Left cardiac atrium (tissue), 4 donors: ENCODE measurements at regions of chr15 and their contacts with region 1.

Region 1: DNA sequence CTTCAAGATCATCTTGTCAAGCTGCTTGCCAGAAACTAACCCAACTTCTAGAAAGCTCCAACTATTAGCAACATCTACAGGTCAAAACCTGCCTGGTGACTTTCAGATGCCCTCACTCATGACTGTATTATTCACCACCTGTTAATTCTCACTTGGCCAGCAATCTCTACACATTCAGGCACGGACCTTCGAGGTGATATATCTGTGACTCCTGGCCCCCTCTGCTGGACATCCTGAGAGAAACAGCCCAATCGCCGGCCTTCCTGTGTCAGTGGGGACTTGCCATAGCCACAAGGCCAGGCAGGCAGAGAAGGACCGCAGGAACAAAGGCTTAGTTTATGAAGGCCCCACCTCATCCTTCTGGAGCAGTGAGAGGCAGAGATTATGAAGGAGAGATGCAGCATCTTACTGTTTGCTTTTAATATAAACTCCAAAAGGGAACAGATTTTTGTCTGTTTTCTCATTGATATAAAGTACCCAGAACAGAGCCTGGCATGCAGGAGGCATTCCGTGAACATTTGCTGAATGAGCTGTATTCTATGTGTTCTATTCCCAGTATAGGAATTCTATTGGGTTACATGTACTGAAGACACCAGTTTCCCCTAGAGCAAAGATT is 24.4 kb upstream of the OCA2 start:
- DNase-seq: peak; percentile 74
- ATAC-seq: peak; percentile 46 to 63

Region 2: DNA sequence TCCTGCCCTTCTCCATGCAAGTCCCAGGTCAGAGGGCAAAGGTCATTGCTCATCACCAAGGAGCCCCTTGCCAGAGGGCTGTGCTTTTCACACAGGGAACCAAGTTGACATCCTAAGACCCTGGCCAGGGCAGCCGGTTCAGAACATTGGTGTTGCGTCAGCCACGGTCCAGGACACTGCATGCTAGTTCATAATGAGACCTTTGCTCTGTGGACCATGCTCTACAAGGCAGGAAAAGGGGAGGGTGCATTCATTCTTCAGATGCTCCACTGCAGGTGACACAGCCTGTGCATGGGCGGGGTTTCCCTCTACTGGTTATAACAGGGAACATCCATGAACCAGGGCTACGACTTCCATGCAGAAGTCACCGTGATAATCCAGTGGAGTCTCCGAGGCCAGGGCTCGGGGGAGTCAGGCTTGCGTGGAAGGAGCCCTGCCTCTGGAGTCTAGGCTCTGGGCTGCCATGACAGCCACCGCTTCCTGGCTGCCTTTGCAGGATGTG is 106.0 kb before region 1 on chr15:
- intact Hi-C with region 1: loop called in 1 of 2 experiments (anchors 5 kb)
- DNase-seq: no peak
- ATAC-seq: no peak

Region 3: DNA sequence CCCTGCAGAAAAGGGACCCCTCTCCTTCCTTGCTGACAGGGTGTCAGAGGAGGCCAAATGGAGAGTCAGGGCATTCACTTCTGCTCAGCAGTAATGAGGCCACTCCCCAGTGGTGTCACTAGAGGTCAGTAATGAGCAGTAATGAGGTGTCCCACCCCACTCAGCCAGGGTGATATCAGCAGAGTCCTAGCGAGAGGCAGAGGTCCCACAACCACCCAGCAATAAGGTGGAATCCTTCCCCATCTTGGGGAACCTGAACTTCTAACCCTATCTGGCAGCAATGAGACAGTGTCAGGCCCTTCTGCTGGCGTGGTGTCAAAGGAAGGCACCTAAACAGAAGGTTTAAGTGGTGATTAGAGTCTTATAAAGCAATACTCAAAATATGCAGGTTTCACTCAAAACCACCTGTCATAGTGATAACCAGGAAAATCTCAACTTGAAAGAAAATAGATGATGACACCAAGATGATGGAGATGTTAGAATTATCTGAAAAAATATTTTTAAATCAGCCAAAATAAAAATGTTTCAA is 37.3 kb before region 1 on chr15:
- intact Hi-C with region 1: loop called in 1 of 2 experiments (anchors 5 kb)
- DNase-seq: peak; percentile 55
- ATAC-seq: peak; percentile 96 to 98

Region 4: GRCh38 chr15:28184166-28184565 is 60.6 kb after region 1 on chr15:
- intact Hi-C with region 1: loop called in 1 of 2 experiments (anchors 10 kb)
- DNase-seq: no peak
- ATAC-seq: no peak

Region 5: DNA sequence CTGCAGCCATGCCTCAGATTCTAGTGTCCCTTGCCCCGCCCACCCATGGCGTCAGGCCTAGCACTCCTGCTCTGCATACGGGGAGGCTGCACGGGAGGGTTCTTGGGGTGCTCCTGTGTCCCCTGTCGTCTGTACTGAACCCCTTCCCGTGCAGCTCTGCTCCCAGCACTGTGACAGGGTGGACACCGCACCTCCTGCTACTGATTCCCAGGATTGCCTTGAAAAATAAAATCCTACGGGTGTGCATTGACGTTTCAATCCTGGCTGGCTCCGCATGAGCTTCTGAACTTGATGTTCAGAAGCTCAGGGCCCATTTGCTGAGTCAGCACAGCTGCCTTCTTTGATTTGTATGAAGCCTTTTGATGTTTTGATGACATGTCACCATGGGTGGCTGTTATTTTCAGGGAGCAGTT is 938.7 kb after region 1 on chr15:
- intact Hi-C with region 1: no loop called
- DNase-seq: no peak
- ATAC-seq: no peak